CD8-positive, alpha-beta T cell (primary cell): ENCODE measurements at regions of chr3 and their contacts with region 1.

Region 1: GRCh38 chr3:124766113-124767095 is 36.2 kb downstream of the UMPS start:
- DNase-seq: no peak
- ATAC-seq: no peak
- H3K4me3 ChIP-seq: no peak overlapping the region
- H3K4me3 Mint-ChIP-seq: no peak overlapping the region
- H3K27ac ChIP-seq: no peak overlapping the region
- H3K27ac Mint-ChIP-seq: no peak overlapping the region
- H3K4me1 ChIP-seq: no peaks in the 10 kb centered on the region
- H3K4me1 Mint-ChIP-seq: peaks cover 2% of the 10 kb centered on the region
- H3K27me3 ChIP-seq: no peaks in the 10 kb centered on the region
- H3K27me3 Mint-ChIP-seq: peaks cover 7% of the 10 kb centered on the region
- CTCF ChIP-seq: no peak

Region 2: GRCh38 chr3:125431912-125432790 is 665.7 kb after region 1 on chr3:
- CTCF ChIA-PET with region 1: interaction called, 12 read pairs
- POLR2A ChIA-PET with region 1: no interaction called
- intact Hi-C with region 1: loop called in 1 of 2 experiments (anchors 2 kb)
- DNase-seq: no peak
- ATAC-seq: no peak
- H3K4me3 ChIP-seq: no peak overlapping the region
- H3K4me3 Mint-ChIP-seq: no peak overlapping the region
- H3K27ac ChIP-seq: no peak overlapping the region
- H3K27ac Mint-ChIP-seq: no peak overlapping the region
- H3K4me1 ChIP-seq: no peaks in the 10 kb centered on the region
- H3K4me1 Mint-ChIP-seq: no peaks in the 10 kb centered on the region
- H3K27me3 ChIP-seq: no peaks in the 10 kb centered on the region
- H3K27me3 Mint-ChIP-seq: no peaks in the 10 kb centered on the region
- CTCF ChIP-seq: no peak